Calu3 (cell line): ENCODE measurements at regions of chr20 and their contacts with region 1.

Region 1: DNA sequence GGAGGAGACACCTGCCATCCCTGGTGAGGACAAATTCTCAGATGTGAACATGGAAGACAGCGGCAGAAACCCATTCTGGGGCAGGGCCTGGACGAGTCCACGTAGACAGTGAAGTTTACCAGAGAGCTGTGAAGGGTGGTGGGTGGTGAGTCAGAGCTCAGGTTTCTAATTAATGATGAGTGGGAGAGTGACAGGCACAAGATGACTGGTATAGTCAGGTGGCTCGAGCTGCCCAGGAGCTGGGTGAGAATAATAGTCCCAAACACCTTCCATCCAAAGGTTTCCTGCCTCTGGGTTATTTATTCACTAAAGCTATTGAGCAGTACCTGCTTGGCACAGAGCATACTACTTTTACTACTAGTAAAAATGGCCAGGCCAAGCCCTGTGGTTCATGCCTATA is 6.0 kb downstream of the TLDC2 start:
- DNase-seq: peak; percentile 88
- H3K4me3 Mint-ChIP-seq: no peak overlapping the region
- H3K27ac Mint-ChIP-seq: peak overlapping the region; percentile 83
- H3K4me1 Mint-ChIP-seq: peaks cover 55% of the 10 kb centered on the region
- H3K27me3 Mint-ChIP-seq: no peaks in the 10 kb centered on the region
- CTCF ChIP-seq: no peak

Region 2: GRCh38 chr20:36808317-36809257 is 73.3 kb before region 1 on chr20:
- CTCF ChIA-PET with region 1: interaction called, 18 read pairs
- intact Hi-C with region 1: no loop called
- DNase-seq: peak; percentile 86
- H3K4me3 Mint-ChIP-seq: no peak overlapping the region
- H3K27ac Mint-ChIP-seq: no peak overlapping the region
- H3K4me1 Mint-ChIP-seq: peaks cover 11% of the 10 kb centered on the region
- H3K27me3 Mint-ChIP-seq: no peaks in the 10 kb centered on the region
- CTCF ChIP-seq: peak; percentile 93

Region 3: DNA sequence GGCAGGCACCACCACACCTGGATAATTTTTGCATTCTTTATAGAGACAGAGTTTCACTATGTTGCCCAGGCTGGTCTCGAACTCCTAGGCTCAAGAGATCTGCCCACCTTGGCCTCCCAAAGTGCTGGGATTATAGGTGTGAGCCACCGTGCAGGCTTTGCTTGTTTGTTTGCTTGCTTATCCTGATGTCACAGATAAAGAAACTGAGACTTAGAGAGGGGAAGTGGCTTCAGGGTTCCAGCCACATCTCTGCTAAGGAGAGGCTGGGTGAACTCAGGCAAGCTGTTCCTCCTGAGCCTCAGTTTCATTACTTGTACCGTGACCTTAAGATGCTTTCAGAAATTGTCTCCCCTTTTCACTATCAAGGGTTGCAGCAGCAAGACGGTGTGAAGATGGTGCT is 54.4 kb before region 1 on chr20:
- CTCF ChIA-PET with region 1: interaction called, 10 read pairs
- intact Hi-C with region 1: loop called (anchors 10 kb)
- DNase-seq: no peak
- H3K4me3 Mint-ChIP-seq: no peak overlapping the region
- H3K27ac Mint-ChIP-seq: no peak overlapping the region
- H3K4me1 Mint-ChIP-seq: no peaks in the 10 kb centered on the region
- H3K27me3 Mint-ChIP-seq: no peaks in the 10 kb centered on the region
- CTCF ChIP-seq: no peak

Region 4: GRCh38 chr20:36862857-36863668 is 18.8 kb before region 1 on chr20:
- CTCF ChIA-PET with region 1: interaction called, 11 read pairs
- intact Hi-C with region 1: no loop called
- DNase-seq: no peak
- H3K4me3 Mint-ChIP-seq: peak overlapping the region; percentile 76
- H3K27ac Mint-ChIP-seq: no peak overlapping the region
- H3K4me1 Mint-ChIP-seq: peaks cover 35% of the 10 kb centered on the region
- H3K27me3 Mint-ChIP-seq: peaks cover 19% of the 10 kb centered on the region
- CTCF ChIP-seq: no peak

Region 5: DNA sequence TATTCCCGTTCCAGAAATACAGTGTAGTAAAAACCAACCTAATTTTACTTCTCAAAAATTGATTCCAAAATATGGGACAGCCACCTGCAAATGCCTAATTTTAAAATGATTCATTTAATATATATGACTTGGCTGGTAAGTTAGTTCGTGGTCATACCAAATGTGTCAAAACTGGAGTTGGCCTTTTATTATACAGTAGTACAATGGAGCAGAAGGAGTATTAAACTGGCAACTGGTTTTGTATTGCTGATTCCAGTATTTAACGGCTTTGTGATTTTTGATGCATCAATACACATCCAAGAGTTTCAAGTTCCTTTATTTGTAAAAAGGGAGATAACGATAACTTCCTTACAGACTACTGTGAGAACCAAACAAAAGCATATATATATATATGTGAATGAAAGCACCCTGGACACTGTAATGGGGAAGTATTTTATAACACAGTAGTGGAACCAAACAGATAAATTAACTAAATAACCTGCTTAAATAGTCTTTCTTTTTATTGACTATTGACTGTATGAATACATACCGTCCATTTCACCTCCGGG is 44.8 kb after region 1 on chr20:
- CTCF ChIA-PET with region 1: no interaction called
- intact Hi-C with region 1: no loop called
- DNase-seq: no peak
- H3K4me3 Mint-ChIP-seq: no peak overlapping the region
- H3K27ac Mint-ChIP-seq: no peak overlapping the region
- H3K4me1 Mint-ChIP-seq: peaks cover 24% of the 10 kb centered on the region
- H3K27me3 Mint-ChIP-seq: no peaks in the 10 kb centered on the region
- CTCF ChIP-seq: no peak